ENCODE measurements at regions of chr13 and their contacts with region 1.

Region 1: DNA sequence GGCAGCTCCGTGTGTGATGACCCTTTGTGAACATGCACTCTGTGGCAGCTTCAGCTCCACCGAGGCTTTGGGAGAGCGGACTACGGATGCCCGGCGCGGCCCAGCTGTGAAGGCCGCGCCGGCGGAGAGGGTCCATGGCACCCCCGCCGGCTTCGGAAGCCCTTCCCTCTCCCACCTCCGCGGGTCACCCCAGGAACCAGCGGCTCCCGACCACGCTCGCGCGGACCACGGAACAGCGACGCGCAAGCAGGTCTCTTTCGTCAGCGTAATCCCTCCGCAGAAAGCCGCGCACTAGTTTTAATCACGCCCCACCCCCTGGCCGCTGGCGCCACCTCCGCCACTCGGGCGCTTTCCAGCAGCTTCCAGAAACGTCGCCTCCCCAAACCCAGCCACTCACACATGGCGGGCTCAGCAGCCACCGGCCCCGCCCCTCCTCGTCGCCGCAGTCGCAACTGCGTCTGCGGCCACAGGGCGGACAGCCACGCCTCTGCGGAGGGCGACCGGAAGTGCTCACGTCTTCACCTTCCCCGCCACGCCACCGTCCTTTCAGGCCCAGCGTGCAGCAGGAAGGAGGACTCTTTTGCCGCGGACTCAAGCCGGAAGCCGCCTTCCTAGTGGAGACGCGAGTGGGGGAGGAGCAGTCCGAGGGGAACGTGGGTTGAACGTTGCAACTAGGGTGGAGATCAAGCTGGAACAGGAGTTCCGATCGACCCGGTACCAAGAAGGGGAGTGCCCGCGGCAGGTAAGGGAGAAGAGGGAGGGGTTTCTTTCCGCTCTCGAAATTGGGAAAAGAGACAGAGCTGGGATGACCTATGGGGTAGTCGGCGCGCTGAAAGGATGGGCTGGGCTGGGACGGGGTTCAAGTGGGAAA is at the start of gene USPL1:
- DNase-seq: peak; percentile 99
- ATAC-seq: peak; percentile 97
- total RNA-seq, gene USPL1: 24.3 TPM

Region 2: DNA sequence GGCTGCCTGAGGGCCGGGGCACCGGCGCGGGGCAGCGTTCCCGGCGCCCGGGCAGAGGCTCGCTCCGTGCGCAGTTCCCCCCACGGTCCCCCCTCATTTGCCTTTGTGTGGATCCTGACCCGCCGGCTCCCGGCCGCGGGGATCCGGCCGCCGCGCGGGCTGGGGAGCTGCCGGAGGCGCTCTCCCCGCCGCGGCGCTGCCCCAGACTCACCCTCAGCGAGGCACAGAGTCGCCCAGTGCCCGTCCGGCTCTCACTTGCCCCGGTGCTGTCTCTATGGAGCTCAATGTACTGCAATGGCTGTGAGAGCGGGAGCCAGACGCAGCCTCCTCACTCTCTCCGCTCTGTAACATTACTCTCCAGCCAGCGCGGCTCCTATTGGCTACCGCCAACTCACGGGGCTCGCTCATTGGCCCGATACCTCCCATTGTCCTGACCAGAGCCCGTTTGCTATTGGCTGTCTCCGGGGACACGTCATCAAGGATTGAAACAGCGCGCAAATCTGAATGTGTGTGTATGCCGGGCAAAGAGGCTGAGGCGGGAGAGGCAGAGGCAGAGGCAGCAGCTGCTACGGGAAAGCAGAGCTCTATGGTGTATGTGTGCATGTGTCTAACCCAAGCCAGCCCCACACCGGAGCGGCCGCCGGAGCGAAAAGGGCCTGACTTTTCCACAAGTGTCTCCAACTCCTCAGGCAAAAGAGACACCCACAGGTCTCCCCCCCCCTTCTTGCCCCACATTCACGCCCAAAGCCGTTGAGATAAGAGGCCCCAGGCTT is 151.8 kb before region 1 on chr13 and contains the start of gene HMGB1:
- intact Hi-C with region 1: loop called (anchors 10 kb)
- DNase-seq: peak; percentile 98
- ATAC-seq: peak; percentile 98
- total RNA-seq, gene HMGB1: 304 TPM

Region 3: GRCh38 chr13:31090991-31091531 is 473.5 kb after region 1 on chr13:
- intact Hi-C with region 1: no loop called
- DNase-seq: no peak
- ATAC-seq: no peak

Region 4: DNA sequence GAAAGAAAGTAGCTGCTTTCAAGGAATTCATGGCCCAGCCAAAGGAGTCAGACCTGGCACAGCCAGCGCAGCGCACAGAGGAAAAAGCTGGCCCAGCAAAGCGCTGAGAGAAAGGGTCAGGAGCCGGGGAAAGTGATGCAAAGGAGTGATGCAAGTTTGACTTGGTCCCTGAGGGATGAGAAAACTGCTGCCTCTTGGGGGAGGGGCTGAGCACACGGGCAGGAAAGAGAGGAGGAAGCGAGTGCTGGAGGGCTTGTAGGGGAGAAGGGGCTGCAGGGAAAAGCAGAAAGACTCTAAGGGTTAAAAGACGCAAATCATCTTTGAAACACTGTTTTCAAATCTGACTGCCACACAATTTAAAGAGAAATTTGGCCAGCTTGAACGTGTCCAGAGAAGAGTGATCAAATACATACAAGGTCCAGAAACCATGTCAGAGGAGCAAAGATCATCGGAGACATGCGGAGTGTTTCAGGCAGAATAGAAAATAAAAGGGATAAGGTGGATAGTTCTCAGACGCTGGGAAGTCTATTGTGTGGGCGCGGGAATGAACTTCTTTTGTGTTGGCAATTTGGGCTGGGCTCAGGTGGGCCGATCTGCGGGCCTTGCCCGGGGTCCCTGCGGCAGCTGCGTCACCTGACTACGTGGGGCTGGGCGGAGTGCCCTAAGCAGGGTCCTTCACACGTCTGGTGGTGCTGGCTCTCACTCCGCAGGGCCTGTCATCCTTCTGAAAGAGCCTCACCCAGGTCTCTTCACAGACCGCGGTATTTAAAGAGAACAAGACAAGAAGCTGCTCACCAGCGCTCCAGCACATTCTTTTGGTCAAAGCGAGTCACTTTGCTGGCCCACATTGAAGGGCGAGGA is 1792.2 kb after region 1 on chr13:
- intact Hi-C with region 1: no loop called
- DNase-seq: peak; percentile 69
- ATAC-seq: peak; percentile 98

Measured in sciatic nerve (tissue), 2 donors.